CD4-positive, alpha-beta memory T cell (primary cell): ENCODE measurements at regions of chr11 and their contacts with region 1.

Region 1: DNA sequence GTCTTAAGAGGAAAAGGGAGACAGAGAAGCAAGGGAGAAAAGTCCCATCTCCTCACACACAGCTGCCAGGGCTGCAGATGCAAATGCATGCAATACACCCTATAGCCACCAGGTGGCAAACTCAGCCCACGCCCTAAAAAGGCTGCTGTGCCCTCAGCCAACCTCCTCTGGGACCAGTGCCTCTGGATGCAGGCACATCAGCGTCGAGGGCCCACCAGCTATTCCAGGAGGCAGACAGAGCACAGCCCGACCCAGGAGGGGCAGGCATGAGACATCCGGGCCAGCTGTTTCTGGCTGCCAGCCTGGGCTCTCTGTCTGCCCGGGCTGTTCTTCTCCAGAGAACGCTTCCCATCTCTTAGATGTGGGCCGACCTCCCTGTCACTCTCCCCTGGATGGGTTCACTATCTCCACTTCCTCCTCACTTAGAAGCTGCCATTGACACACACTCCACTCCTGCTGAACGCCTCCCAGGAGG is 39.7 kb downstream of the TPBGL start:
- DNase-seq: peak; percentile 57 to 74 (median 69)
- H3K4me3 ChIP-seq: no peak overlapping the region
- H3K4me3 Mint-ChIP-seq: peak overlapping the region in 2 of 8 donors; percentile 53 to 54
- H3K27ac ChIP-seq: no peak overlapping the region
- H3K27ac Mint-ChIP-seq: peak overlapping the region; percentile 68 to 95 (median 91)
- H3K4me1 ChIP-seq: peaks cover 37% of the 10 kb centered on the region
- H3K4me1 Mint-ChIP-seq: peaks cover 33 to 50% (median 43%) of the 10 kb centered on the region in 4 donors
- H3K27me3 ChIP-seq: no peaks in the 10 kb centered on the region
- H3K27me3 Mint-ChIP-seq: no peaks in the 10 kb centered on the region

Region 2: GRCh38 chr11:75118577-75118976 is 161.7 kb before region 1 on chr11:
- CTCF ChIA-PET with region 1: no interaction called
- POLR2A ChIA-PET with region 1: no interaction called
- intact Hi-C with region 1: no loop called
- DNase-seq: no peak
- H3K4me3 ChIP-seq: no peak overlapping the region
- H3K4me3 Mint-ChIP-seq: no peak overlapping the region
- H3K27ac ChIP-seq: no peak overlapping the region
- H3K27ac Mint-ChIP-seq: no peak overlapping the region
- H3K4me1 ChIP-seq: no peaks in the 10 kb centered on the region
- H3K4me1 Mint-ChIP-seq: no peaks in the 10 kb centered on the region
- H3K27me3 ChIP-seq: no peaks in the 10 kb centered on the region
- H3K27me3 Mint-ChIP-seq: peaks cover 23 to 26% of the 10 kb centered on the region in 2 donors

Region 3: GRCh38 chr11:75191330-75191717 is 88.9 kb before region 1 on chr11:
- CTCF ChIA-PET with region 1: no interaction called
- POLR2A ChIA-PET with region 1: no interaction called
- intact Hi-C with region 1: no loop called
- DNase-seq: no peak
- H3K4me3 ChIP-seq: no peak overlapping the region
- H3K4me3 Mint-ChIP-seq: no peak overlapping the region
- H3K27ac ChIP-seq: no peak overlapping the region
- H3K27ac Mint-ChIP-seq: no peak overlapping the region
- H3K4me1 ChIP-seq: no peaks in the 10 kb centered on the region
- H3K4me1 Mint-ChIP-seq: no peaks in the 10 kb centered on the region
- H3K27me3 ChIP-seq: no peaks in the 10 kb centered on the region
- H3K27me3 Mint-ChIP-seq: no peaks in the 10 kb centered on the region

Region 4: GRCh38 chr11:75241036-75241905 is 39.0 kb before region 1 on chr11:
- CTCF ChIA-PET with region 1: interaction called, 270 read pairs
- POLR2A ChIA-PET with region 1: interaction called, 13 read pairs
- intact Hi-C with region 1: loop called (anchors 5 kb)
- DNase-seq: peak; percentile 76 to 90 (median 86)
- H3K4me3 ChIP-seq: peak overlapping the region in 1 of 2 donors; percentile 47
- H3K4me3 Mint-ChIP-seq: peak overlapping the region in 7 of 8 donors; percentile 67 to 82 (median 73)
- H3K27ac ChIP-seq: no peak overlapping the region
- H3K27ac Mint-ChIP-seq: peak overlapping the region in 1 of 7 donors; percentile 87
- H3K4me1 ChIP-seq: peaks cover 14% of the 10 kb centered on the region
- H3K4me1 Mint-ChIP-seq: peaks cover 1 to 16% (median 5%) of the 10 kb centered on the region in 4 donors
- H3K27me3 ChIP-seq: peaks cover 16% of the 10 kb centered on the region
- H3K27me3 Mint-ChIP-seq: peaks cover 24 to 27% of the 10 kb centered on the region in 2 donors

Region 5: GRCh38 chr11:75328426-75329277 is 48.4 kb after region 1 on chr11:
- CTCF ChIA-PET with region 1: interaction called, 41 read pairs
- POLR2A ChIA-PET with region 1: interaction called, 11 read pairs
- intact Hi-C with region 1: loop called (anchors 1 kb)
- DNase-seq: peak; percentile 57 to 68 (median 66)
- H3K4me3 ChIP-seq: peak overlapping the region; percentile 10 to 11
- H3K4me3 Mint-ChIP-seq: peak overlapping the region; percentile 25 to 69 (median 56)
- H3K27ac ChIP-seq: peak overlapping the region; percentile 25
- H3K27ac Mint-ChIP-seq: peak overlapping the region; percentile 65 to 91 (median 86)
- H3K4me1 ChIP-seq: peaks cover 54% of the 10 kb centered on the region
- H3K4me1 Mint-ChIP-seq: peaks cover 44 to 78% (median 59%) of the 10 kb centered on the region in 4 donors
- H3K27me3 ChIP-seq: no peaks in the 10 kb centered on the region
- H3K27me3 Mint-ChIP-seq: no peaks in the 10 kb centered on the region

Region 6: DNA sequence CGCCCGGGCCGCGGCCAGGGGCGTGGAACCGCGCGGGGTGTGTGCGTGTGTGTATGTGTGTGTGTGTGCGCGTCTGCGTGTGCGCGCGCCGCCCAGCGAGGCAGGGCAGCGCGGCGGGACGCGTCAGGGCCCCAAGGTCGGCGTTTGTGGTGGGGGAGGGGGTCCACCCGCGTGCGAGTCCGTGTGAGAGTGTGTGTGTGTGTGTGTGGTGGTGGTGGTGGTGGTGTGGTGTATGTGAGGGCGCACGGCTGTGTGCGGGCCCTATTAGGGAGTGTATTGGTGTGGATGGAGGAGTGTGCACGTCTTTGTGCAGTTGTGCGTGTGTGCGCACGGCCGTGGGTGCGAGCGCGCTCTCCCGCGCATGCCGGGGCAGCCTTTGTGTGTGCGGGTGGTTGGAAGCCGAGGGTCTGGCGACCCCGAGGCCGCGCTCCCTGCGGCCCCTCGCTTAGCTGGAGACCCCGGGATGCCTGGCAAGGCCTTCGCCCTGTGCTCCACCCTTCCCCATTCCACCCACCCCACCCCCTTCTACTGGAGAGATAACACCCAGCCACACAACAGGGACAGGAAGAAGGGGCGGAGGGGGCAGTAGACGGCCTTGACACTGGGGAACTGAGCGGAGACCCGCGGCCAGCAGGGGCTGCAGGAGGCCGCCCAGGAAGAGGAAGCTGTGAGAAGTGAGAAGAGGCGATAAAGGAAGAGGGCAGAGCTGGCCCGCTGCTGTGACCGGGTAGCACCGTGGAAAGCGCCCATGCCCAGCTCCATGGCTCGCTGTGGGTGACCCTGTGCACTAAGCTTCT is 71.7 kb after region 1 on chr11:
- CTCF ChIA-PET with region 1: interaction called, 22 read pairs
- POLR2A ChIA-PET with region 1: interaction called, 62 read pairs
- intact Hi-C with region 1: no loop called
- DNase-seq: peak; percentile 70 to 80 (median 74)
- H3K4me3 ChIP-seq: peak overlapping the region; percentile 77 to 83
- H3K4me3 Mint-ChIP-seq: peak overlapping the region; percentile 90 to 96 (median 94)
- H3K27ac ChIP-seq: peak overlapping the region; percentile 75
- H3K27ac Mint-ChIP-seq: peak overlapping the region; percentile 87 to 96 (median 93)
- H3K4me1 ChIP-seq: peaks cover 49% of the 10 kb centered on the region
- H3K4me1 Mint-ChIP-seq: peaks cover 40 to 73% (median 55%) of the 10 kb centered on the region in 4 donors
- H3K27me3 ChIP-seq: no peaks in the 10 kb centered on the region
- H3K27me3 Mint-ChIP-seq: no peaks in the 10 kb centered on the region

Region 7: DNA sequence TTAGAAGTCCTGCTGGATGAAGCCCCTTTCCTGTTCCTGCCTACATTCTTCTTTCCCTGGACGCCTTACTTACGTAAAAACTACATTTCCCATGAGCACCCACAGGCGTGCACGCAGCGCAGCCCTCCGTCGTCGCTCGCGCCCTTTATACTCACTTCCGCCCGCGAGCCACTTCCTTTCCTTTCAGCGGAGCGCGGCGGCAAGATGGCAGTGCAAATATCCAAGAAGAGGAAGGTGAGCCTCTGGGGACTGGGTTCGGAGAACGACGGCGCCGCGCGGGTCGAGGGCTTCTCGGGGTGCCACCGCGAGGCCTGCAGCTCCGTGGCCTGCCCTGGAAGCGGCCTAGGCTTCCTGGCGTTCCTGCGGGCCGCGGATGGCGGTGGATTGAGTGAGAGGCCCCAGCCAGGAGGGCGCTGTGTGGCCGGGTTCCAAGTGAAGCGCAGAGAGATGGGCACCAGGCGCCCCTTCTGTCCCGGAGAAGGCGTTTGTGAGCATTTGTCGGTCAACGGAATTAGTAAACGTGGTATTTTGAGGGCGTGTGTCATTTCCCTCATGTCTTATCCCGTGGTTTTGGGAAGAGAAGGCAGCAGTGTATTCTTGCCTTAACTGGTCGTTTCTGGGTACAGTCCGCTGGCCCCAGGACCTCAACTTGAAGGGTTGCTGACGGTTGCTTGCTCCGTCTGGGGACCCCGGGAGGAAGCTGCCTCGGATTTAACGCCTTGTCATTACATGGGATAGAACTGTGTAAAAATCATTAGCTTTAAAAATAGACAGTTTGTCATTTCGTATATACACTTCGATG is 119.3 kb after region 1 on chr11 and contains the start of gene RPS3:
- CTCF ChIA-PET with region 1: interaction called, 10 read pairs
- POLR2A ChIA-PET with region 1: interaction called, 34 read pairs
- intact Hi-C with region 1: no loop called
- DNase-seq: peak; percentile 87 to 89 (median 88)
- H3K4me3 ChIP-seq: peak within 1 kb of the TSS; percentile 71 to 93
- H3K4me3 Mint-ChIP-seq: peak within 1 kb of the TSS; percentile 88 to 98 (median 96)
- H3K27ac ChIP-seq: peak within 1 kb of the TSS; percentile 83
- H3K27ac Mint-ChIP-seq: peak within 1 kb of the TSS; percentile 96 to 99 (median 98)
- H3K4me1 ChIP-seq: peaks cover 38% of the 10 kb centered on the region
- H3K4me1 Mint-ChIP-seq: peaks cover 31 to 55% (median 40%) of the 10 kb centered on the region in 4 donors
- H3K27me3 ChIP-seq: no peaks in the 10 kb centered on the region
- H3K27me3 Mint-ChIP-seq: peaks cover 0 to 1% of the 10 kb centered on the region in 2 donors
- total RNA-seq, gene RPS3: 4,846 to 5,053 TPM

Region 8: GRCh38 chr11:75532200-75533048 is 252.2 kb after region 1 on chr11:
- CTCF ChIA-PET with region 1: interaction called, 13 read pairs
- POLR2A ChIA-PET with region 1: interaction called, 6 read pairs
- intact Hi-C with region 1: loop called (anchors 1 kb)
- DNase-seq: peak; percentile 77 to 83 (median 80)
- H3K4me3 ChIP-seq: no peak overlapping the region
- H3K4me3 Mint-ChIP-seq: peak overlapping the region in 7 of 8 donors; percentile 20 to 61 (median 35)
- H3K27ac ChIP-seq: no peak overlapping the region
- H3K27ac Mint-ChIP-seq: peak overlapping the region in 6 of 7 donors; percentile 8 to 86 (median 75)
- H3K4me1 ChIP-seq: peaks cover 30% of the 10 kb centered on the region
- H3K4me1 Mint-ChIP-seq: peaks cover 28 to 53% (median 33%) of the 10 kb centered on the region in 4 donors
- H3K27me3 ChIP-seq: no peaks in the 10 kb centered on the region
- H3K27me3 Mint-ChIP-seq: no peaks in the 10 kb centered on the region